Gastrocnemius medialis (tissue), 4 donors: ENCODE measurements at regions of chr6 and their contacts with region 1.

Region 1: GRCh38 chr6:39980839-39981580 is 46.7 kb upstream of the MOCS1 start:
- DNase-seq: no peak
- ATAC-seq: peak; percentile 82 to 87
- H3K4me3 ChIP-seq: no peak overlapping the region
- H3K27ac ChIP-seq: peak overlapping the region in 3 of 4 donors; percentile 8 to 32 (median 15)
- H3K4me1 ChIP-seq: peaks cover 3 to 8% of the 10 kb centered on the region in 2 donors
- H3K27me3 ChIP-seq: no peaks in the 10 kb centered on the region
- CTCF ChIP-seq: peak; percentile 33 to 63 (median 53)
- POLR2A ChIP-seq: no peak

Region 2: DNA sequence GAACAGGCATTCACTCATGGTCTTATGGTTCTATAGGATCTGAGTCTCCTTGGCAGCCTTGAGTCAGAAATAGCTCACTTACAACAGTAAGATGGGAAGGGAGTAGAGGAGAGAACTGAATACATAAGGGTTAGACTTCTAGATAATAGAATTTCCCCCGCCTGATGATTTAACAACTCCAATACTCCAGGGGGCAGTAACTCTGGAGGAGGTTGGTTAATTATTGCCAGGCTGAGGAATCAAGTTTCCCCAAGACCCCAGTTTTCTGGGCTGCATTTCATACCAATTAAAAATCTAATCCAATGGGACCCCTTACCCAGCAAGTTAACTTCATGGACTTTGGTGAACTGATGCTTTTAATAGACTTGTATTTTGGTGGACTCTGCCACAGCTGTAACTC is 47.4 kb after region 1 on chr6:
- in situ Hi-C with region 1: no loop called
- intact Hi-C with region 1: no loop called
- DNase-seq: no peak
- ATAC-seq: no peak
- H3K4me3 ChIP-seq: no peak overlapping the region
- H3K27ac ChIP-seq: no peak overlapping the region
- H3K4me1 ChIP-seq: no peaks in the 10 kb centered on the region
- H3K27me3 ChIP-seq: no peaks in the 10 kb centered on the region
- CTCF ChIP-seq: no peak
- POLR2A ChIP-seq: no peak

Region 3: DNA sequence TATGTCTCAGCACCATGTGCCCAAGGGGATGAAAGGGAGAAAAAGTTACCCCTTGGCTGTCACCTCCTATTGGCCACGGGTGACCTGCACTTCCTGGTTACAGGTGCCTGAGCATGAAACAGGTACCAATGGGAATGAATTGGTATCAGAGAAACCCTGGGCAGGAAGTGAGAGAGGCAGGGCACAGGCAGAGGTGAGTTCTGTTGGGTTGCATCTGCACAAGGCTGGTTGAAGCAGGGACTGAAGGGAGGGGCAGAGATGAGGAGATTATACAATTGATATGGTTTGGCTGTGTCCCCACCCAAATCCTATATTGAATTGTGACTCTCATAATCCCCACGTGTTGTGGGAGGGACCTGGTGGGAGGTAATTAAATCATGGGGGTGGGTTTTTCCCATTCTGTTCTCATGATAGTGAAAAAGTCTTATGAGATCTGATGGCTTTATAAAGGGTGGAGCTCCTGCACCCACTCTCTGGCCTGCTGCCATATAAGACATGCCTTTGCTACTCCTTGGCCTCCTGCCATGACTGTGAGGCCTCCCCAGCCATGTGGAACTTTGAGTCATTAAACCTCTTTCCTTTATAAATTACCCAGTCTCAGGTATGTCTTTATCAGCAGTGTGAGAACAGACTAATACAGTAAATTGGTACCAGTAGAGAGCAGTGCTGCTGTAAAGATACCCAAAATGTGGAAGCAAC is 314.4 kb after region 1 on chr6:
- in situ Hi-C with region 1: loop called in 3 of 4 experiments (anchors 10 to 25 kb)
- intact Hi-C with region 1: no loop called
- DNase-seq: no peak
- ATAC-seq: no peak
- H3K4me3 ChIP-seq: no peak overlapping the region
- H3K27ac ChIP-seq: no peak overlapping the region
- H3K4me1 ChIP-seq: no peaks in the 10 kb centered on the region
- H3K27me3 ChIP-seq: no peaks in the 10 kb centered on the region
- CTCF ChIP-seq: no peak
- POLR2A ChIP-seq: no peak

Region 4: GRCh38 chr6:40308533-40309306 is 327.7 kb after region 1 on chr6:
- in situ Hi-C with region 1: loop called (anchors 5 to 25 kb)
- intact Hi-C with region 1: loop called (anchors 1 kb)
- DNase-seq: peak in 1 of 2 donors; percentile 35
- ATAC-seq: peak in 1 of 2 donors; percentile 58
- H3K4me3 ChIP-seq: no peak overlapping the region
- H3K27ac ChIP-seq: no peak overlapping the region
- H3K4me1 ChIP-seq: peaks cover 0 to 7% of the 10 kb centered on the region in 2 donors
- H3K27me3 ChIP-seq: no peaks in the 10 kb centered on the region
- CTCF ChIP-seq: peak; percentile 83 to 86 (median 84)
- POLR2A ChIP-seq: no peak

Region 5: GRCh38 chr6:40587240-40588069 is 606.4 kb after region 1 on chr6 and contains the start of gene LRFN2:
- in situ Hi-C with region 1: loop called in 2 of 4 experiments (anchors 25 kb)
- intact Hi-C with region 1: loop called (anchors 5 kb)
- DNase-seq: peak; percentile 33 to 54
- ATAC-seq: peak; percentile 88
- H3K4me3 ChIP-seq: peak within 1 kb of the TSS; percentile 37 to 64 (median 54)
- H3K27ac ChIP-seq: peak within 1 kb of the TSS; percentile 43 to 71 (median 56)
- H3K4me1 ChIP-seq: peaks cover 4 to 10% of the 10 kb centered on the region in 2 donors
- H3K27me3 ChIP-seq: peaks cover 0 to 4% (median 0%) of the 10 kb centered on the region in 3 donors
- CTCF ChIP-seq: peak; percentile 60 to 88 (median 78)
- POLR2A ChIP-seq: no peak
- total RNA-seq, gene LRFN2: not detected

Region 6: GRCh38 chr6:40845553-40845952 is 864.5 kb after region 1 on chr6:
- in situ Hi-C with region 1: loop called in 2 of 4 experiments (anchors 25 kb)
- intact Hi-C with region 1: no loop called
- DNase-seq: no peak
- ATAC-seq: peak in 1 of 2 donors; percentile 37
- H3K4me3 ChIP-seq: no peak overlapping the region
- H3K27ac ChIP-seq: no peak overlapping the region
- H3K4me1 ChIP-seq: peaks cover 0 to 13% of the 10 kb centered on the region in 2 donors
- H3K27me3 ChIP-seq: no peaks in the 10 kb centered on the region
- CTCF ChIP-seq: peak in 3 of 5 experiments; percentile 15 to 36 (median 31)
- POLR2A ChIP-seq: no peak

Region 7: DNA sequence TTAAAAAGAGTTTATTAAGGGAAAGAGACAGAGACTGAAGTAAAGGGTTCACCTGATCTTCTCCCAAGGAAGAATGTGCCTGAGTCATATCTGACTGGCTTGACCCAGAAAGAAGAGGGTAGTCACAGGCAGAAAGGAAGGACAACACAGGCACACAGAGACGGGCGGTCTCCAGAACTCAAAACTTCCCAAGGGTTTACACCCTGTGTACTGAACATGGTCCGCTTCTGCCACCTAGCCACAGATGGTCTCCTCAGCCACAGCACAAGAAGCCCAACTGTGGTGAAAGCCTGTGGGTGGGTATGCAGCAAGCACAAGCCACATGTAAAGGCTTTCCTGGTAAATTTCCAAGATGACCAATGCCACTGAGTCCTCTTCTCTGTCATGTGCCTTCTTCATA is 1040.8 kb after region 1 on chr6:
- in situ Hi-C with region 1: loop called (anchors 25 kb)
- intact Hi-C with region 1: loop called (anchors 10 kb)
- DNase-seq: no peak
- ATAC-seq: peak; percentile 84 to 87
- H3K4me3 ChIP-seq: no peak overlapping the region
- H3K27ac ChIP-seq: peak overlapping the region in 1 of 4 donors; percentile 29
- H3K4me1 ChIP-seq: peaks cover 0 to 8% of the 10 kb centered on the region in 2 donors
- H3K27me3 ChIP-seq: no peaks in the 10 kb centered on the region
- CTCF ChIP-seq: peak in 2 of 5 experiments; percentile 29 to 31
- POLR2A ChIP-seq: no peak

Region 8: DNA sequence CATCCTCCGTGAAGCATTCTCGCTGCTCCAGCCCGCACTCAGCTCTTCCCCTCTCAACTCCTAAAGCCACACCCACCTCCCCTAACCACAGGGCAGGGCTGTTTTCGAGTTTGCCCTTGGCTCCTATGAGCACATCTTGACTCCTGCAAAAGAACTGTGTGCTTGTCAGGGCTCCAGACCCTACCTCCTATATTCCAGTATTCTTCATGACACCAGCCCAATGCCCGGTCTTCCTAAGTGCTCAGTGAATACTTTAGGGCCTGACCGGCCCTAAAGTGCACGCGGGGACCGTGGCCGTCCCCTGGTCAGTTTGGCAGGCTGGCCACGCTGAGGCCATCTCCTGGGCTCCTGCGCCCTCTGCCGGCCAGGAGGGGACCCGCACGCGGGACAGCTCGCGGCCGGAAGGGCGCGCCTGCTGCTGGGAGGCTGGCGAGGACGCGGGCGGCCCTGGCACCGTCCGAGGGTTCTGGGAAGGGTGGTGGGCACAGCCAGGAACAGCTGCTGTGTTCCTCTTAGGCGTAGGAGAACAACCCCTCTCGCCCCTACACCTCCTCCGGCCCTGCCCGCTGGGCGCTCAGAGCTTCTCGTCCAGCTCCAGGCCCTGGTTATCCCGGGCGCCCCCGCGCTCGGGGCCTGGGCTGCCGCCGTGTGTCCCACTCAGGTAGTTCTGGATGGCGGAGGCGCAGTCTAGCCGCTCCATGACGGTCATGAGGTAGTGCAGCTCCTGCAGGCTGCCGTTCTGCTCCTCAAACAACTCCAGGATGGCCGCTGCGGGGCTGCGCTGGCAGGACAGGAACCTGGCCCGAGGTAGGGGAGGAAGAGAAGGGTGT is 1047.0 kb after region 1 on chr6:
- in situ Hi-C with region 1: loop called (anchors 25 kb)
- intact Hi-C with region 1: loop called (anchors 10 kb)
- DNase-seq: peak; percentile 67 to 79
- ATAC-seq: peak; percentile 82 to 91
- H3K4me3 ChIP-seq: peak overlapping the region; percentile 60 to 79 (median 70)
- H3K27ac ChIP-seq: peak overlapping the region; percentile 81 to 85 (median 82)
- H3K4me1 ChIP-seq: peaks cover 15 to 16% of the 10 kb centered on the region in 2 donors
- H3K27me3 ChIP-seq: no peaks in the 10 kb centered on the region
- CTCF ChIP-seq: peak; percentile 99 to 100 (median 99)
- POLR2A ChIP-seq: no peak